ENCODE measurements at regions of chr10 and their contacts with region 1.

Region 1: GRCh38 chr10:31318854-31319601 is at the start of gene ZEB1:
- DNase-seq: peak; percentile 90
- ATAC-seq: peak; percentile 82
- total RNA-seq, gene ZEB1: 75.5 TPM

Region 2: DNA sequence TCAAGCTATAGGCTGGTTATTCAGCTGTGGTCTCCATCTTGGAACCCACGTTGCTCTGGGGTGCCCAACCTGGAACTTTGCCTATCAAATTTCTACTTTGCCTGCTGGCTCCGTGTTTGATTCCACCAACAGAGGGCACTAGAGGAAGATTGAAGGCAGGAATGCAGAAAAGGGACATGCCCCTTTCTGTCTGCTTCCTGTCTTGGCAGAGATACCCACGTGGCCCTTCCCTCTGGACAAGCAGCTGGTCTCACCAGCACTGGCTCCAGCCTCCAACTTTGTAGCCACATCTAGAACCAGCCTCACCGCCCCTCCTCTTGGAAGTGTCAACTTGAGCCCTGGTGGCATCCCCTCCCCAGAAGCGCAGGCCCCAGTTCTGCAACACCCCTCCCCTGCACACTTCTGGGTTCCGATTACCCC is 235.3 kb before region 1 on chr10:
- intact Hi-C with region 1: loop called (anchors 5 kb)
- DNase-seq: no peak
- ATAC-seq: peak; percentile 54

Region 3: DNA sequence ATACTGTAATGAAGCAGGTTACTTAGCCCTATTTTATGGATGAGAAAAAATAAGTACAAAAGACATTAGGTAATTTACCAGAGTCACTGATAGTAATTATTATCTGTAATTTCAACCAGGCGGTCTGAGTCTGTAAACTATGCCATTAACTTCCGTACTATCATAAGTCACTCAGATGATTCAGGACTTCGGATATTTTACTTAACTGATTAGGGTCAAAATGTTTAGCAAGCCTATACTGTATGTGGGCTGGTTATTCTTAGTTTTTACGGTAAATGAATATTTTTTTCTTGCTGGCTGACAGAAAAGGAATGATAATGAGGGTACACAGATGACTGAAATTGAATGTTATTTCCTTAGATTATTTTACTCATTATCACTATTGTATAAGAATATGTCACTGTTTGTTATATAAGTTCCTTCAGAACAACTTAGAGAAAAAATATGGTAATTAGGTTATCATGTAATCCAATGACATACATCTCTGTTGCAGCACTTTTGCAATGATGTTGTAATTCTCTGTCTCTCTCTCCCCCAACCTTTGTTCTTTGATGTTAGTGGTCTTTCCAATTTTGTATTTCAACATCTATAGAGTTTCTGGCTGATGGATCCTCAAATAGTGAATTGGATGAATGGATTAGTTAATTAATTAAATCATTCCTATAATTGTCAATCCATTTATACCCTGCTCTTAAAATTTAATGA is 165.6 kb after region 1 on chr10:
- intact Hi-C with region 1: loop called (anchors 5 kb)
- DNase-seq: no peak
- ATAC-seq: no peak

Region 4: DNA sequence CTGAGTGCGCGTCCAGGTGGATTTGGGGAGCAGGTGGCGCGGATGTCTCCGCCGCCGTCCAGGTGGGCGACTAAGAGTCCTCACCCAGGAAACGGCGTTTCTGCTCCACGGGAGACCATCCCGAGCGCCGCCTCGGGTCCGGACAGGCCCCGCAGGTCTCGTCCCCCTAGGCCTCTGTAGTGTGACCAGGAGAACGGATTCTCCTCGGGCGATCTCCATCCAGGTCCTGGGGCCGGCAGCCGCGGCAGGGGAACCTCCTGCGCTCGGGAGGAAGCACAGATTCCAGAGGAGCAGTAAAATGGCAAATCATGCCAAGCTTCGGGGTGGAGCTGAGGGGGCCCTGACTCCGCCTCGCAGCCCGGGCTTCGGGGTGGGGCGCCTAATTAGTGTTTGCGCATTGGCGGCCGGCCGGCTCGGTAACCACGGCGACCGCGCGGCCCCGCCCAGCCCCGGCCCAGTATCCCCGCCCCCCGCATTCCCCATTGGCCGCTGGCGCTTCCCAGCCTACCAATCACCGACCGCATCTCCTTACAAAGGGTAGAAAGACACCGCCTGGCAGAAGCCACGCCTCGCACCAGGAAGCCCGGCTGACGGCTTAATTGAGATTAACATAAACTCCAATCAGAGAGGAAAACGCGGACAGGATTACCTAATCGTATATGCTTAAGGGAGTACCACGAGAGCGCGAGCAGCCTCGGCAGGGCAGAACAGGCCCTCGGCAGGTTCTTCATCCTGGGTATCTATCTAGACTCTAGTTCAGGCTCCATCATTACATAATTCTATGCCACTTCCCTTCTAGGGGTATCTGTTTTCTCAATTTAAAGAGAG is 441.0 kb after region 1 on chr10:
- intact Hi-C with region 1: loop called (anchors 10 kb)
- DNase-seq: peak; percentile 98
- ATAC-seq: peak; percentile 96